Naive thymus-derived CD4-positive, alpha-beta T cell (primary cell): ENCODE measurements at regions of chr18 and their contacts with region 1.

Region 1: GRCh38 chr18:10525371-10526210 is at the start of gene NAPG:
- DNase-seq: peak; percentile 88 to 94 (median 91)
- ATAC-seq: peak; percentile 94
- H3K4me3 ChIP-seq: peak within 1 kb of the TSS; percentile 93
- H3K4me3 Mint-ChIP-seq: peak within 1 kb of the TSS; percentile 94 to 99 (median 98)
- H3K27ac ChIP-seq: peak within 1 kb of the TSS; percentile 76
- H3K27ac Mint-ChIP-seq: peak within 1 kb of the TSS; percentile 84 to 99 (median 96)
- H3K4me1 ChIP-seq: peaks cover 4 to 22% of the 10 kb centered on the region in 2 donors
- H3K4me1 Mint-ChIP-seq: peaks cover 43 to 62% (median 53%) of the 10 kb centered on the region in 7 donors
- H3K27me3 ChIP-seq: no peaks in the 10 kb centered on the region
- H3K27me3 Mint-ChIP-seq: peaks cover 0 to 10% (median 0%) of the 10 kb centered on the region in 5 donors
- total RNA-seq, gene NAPG: 28.1 to 35.7 (median 30.0) TPM

Region 2: DNA sequence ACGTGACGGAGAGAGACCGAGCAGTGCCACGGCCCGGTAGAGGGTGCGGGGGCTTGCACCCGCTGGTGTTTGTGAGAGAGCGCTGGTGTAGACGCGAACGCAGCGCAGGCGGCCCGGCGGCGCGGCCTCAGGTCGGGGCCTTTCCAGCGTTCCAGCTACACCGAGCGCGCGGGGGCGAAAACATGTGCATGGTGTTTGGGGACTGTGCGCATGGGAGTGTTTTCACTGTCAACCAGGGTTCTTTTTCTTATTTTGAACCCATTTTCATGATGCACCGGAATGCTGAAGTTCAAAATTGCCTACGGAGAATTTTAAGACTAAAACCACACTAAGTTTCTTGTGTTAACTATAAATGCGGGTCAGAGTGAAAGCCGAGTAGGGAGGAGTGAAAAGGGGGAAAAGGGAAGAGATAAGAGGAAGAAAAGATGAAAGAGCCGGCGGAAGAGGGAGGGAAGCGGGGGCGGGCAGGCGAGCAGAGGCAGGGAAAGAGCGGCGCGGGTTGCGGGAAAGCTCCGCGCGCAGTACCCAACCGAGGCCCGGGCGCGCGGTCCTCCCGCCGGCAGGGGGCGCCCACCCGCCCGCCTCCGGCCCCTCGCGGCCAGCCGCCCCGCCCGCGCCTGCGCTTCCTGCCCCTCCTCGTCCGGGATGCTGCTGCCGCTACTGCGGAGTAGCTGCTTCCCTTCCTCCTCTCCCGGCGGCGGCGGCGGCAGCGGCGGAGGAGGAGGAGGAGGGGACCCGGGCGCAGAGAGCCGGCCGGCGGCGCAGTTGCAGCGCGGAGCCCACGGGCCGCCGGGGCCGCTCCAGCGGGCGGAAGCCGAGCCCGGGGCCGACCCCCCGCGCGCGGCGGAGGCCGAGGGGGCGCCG is 1916.6 kb before region 1 on chr18 and contains the start of gene RAB12:
- CTCF ChIA-PET with region 1: no interaction called
- POLR2A ChIA-PET with region 1: no interaction called
- intact Hi-C with region 1: loop called (anchors 2 to 5 kb)
- DNase-seq: peak; percentile 76 to 93 (median 87)
- ATAC-seq: peak; percentile 97
- H3K4me3 ChIP-seq: peak within 1 kb of the TSS; percentile 78
- H3K4me3 Mint-ChIP-seq: peak within 1 kb of the TSS; percentile 88 to 97 (median 94)
- H3K27ac ChIP-seq: peak within 1 kb of the TSS; percentile 76
- H3K27ac Mint-ChIP-seq: peak within 1 kb of the TSS; percentile 91 to 99 (median 96)
- H3K4me1 ChIP-seq: peaks cover 18 to 29% of the 10 kb centered on the region in 2 donors
- H3K4me1 Mint-ChIP-seq: peaks cover 42 to 63% (median 56%) of the 10 kb centered on the region in 7 donors
- H3K27me3 ChIP-seq: no peaks in the 10 kb centered on the region
- H3K27me3 Mint-ChIP-seq: peaks cover 0 to 16% (median 7%) of the 10 kb centered on the region in 5 donors
- total RNA-seq, gene RAB12: 19.8 to 26.2 (median 23.0) TPM

Region 3: GRCh38 chr18:9474983-9475642 is 1050.5 kb before region 1 on chr18 and contains the start of gene RALBP1:
- CTCF ChIA-PET with region 1: no interaction called
- POLR2A ChIA-PET with region 1: no interaction called
- intact Hi-C with region 1: loop called in 1 of 2 experiments (anchors 5 kb)
- DNase-seq: peak; percentile 92 to 98 (median 96)
- ATAC-seq: peak; percentile 99
- H3K4me3 ChIP-seq: peak within 1 kb of the TSS; percentile 88
- H3K4me3 Mint-ChIP-seq: peak within 1 kb of the TSS; percentile 84 to 99 (median 97)
- H3K27ac ChIP-seq: peak within 1 kb of the TSS; percentile 81
- H3K27ac Mint-ChIP-seq: peak within 1 kb of the TSS; percentile 82 to 97 (median 94)
- H3K4me1 ChIP-seq: peaks cover 0 to 14% of the 10 kb centered on the region in 2 donors
- H3K4me1 Mint-ChIP-seq: peaks cover 21 to 41% (median 30%) of the 10 kb centered on the region in 7 donors
- H3K27me3 ChIP-seq: no peaks in the 10 kb centered on the region
- H3K27me3 Mint-ChIP-seq: peaks cover 0 to 24% (median 5%) of the 10 kb centered on the region in 5 donors
- total RNA-seq, gene RALBP1: 20.3 to 47.8 (median 42.2) TPM

Region 4: GRCh38 chr18:10453806-10454673 is 71.6 kb before region 1 on chr18 and contains the start of gene APCDD1:
- CTCF ChIA-PET with region 1: no interaction called
- POLR2A ChIA-PET with region 1: no interaction called
- intact Hi-C with region 1: no loop called
- DNase-seq: no peak
- ATAC-seq: no peak
- H3K4me3 ChIP-seq: no peak within 1 kb of the TSS
- H3K4me3 Mint-ChIP-seq: peak within 1 kb of the TSS in 8 of 10 donors; percentile 18 to 71 (median 56)
- H3K27ac ChIP-seq: no peak within 1 kb of the TSS
- H3K27ac Mint-ChIP-seq: no peak within 1 kb of the TSS
- H3K4me1 ChIP-seq: no peaks in the 10 kb centered on the region
- H3K4me1 Mint-ChIP-seq: peaks cover 0 to 6% (median 4%) of the 10 kb centered on the region in 7 donors
- H3K27me3 ChIP-seq: no peaks in the 10 kb centered on the region
- H3K27me3 Mint-ChIP-seq: peaks cover 63 to 79% (median 69%) of the 10 kb centered on the region in 5 donors
- total RNA-seq, gene APCDD1: 0.16 to 0.81 TPM in 2 of 5 experiments, not detected in the others

Region 5: DNA sequence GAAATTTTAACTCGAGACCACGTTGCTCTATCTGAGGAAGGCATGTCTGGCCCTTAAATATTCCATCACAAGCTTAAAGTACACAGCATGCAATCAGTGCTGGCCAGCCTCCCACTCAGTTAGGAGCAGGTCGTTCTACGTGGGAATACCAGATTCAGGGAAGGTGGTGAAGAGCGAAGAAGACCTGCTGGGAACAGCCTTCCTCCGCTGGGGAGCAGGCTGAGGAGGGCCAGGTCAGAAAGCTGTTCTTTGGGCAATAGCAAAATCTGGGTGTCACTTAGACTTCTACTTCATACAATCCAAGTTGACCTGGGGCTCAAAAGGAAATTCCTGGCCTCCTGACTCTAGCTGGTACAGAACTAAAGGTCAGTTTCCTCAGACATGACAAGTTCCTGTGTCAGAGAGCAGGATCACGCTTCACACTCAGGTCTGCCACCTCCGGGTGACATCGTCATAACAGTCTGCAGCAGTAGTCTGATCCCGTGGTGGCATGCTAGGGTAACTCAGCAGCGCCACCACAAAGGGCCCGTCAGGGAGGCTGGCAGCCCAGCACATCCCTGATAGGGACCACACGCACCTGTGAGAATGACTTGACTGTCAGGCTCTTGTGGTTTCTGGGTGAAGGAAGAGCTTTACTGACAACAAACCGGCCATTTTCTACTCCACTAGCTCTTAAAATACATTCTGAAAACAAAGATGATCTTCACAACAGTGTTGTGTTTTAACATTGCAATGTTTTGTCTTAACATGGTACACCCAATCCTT is 35.0 kb before region 1 on chr18:
- CTCF ChIA-PET with region 1: interaction called, 3 read pairs
- POLR2A ChIA-PET with region 1: no interaction called
- intact Hi-C with region 1: loop called in 1 of 2 experiments (anchors 1 kb)
- DNase-seq: peak; percentile 23 to 69 (median 60)
- ATAC-seq: peak; percentile 98
- H3K4me3 ChIP-seq: no peak overlapping the region
- H3K4me3 Mint-ChIP-seq: no peak overlapping the region
- H3K27ac ChIP-seq: no peak overlapping the region
- H3K27ac Mint-ChIP-seq: peak overlapping the region in 4 of 9 donors; percentile 44 to 85 (median 62)
- H3K4me1 ChIP-seq: no peaks in the 10 kb centered on the region
- H3K4me1 Mint-ChIP-seq: peaks cover 0 to 11% (median 9%) of the 10 kb centered on the region in 7 donors
- H3K27me3 ChIP-seq: no peaks in the 10 kb centered on the region
- H3K27me3 Mint-ChIP-seq: peaks cover 0 to 1% (median 0%) of the 10 kb centered on the region in 5 donors

Region 6: GRCh38 chr18:12376718-12377555 is 1851.3 kb after region 1 on chr18 and contains the start of gene AFG3L2:
- CTCF ChIA-PET with region 1: no interaction called
- POLR2A ChIA-PET with region 1: no interaction called
- intact Hi-C with region 1: loop called in 1 of 2 experiments (anchors 5 kb)
- DNase-seq: peak; percentile 99 to 100 (median 100)
- ATAC-seq: peak; percentile 93
- H3K4me3 ChIP-seq: peak within 1 kb of the TSS; percentile 93
- H3K4me3 Mint-ChIP-seq: peak within 1 kb of the TSS; percentile 85 to 93 (median 92)
- H3K27ac ChIP-seq: peak within 1 kb of the TSS; percentile 97
- H3K27ac Mint-ChIP-seq: peak within 1 kb of the TSS; percentile 77 to 95 (median 90)
- H3K4me1 ChIP-seq: peaks cover 13 to 28% of the 10 kb centered on the region in 2 donors
- H3K4me1 Mint-ChIP-seq: peaks cover 32 to 52% (median 46%) of the 10 kb centered on the region in 7 donors
- H3K27me3 ChIP-seq: no peaks in the 10 kb centered on the region
- H3K27me3 Mint-ChIP-seq: peaks cover 0 to 22% (median 0%) of the 10 kb centered on the region in 5 donors
- total RNA-seq, gene AFG3L2: 26.3 to 42.3 (median 32.0) TPM